MCF 10A (cell line): ENCODE measurements at regions of chr4 and their contacts with region 1.

Region 1: GRCh38 chr4:154731756-154732155 is 12.0 kb upstream of the LRAT start:
- DNase-seq: no peak
- H3K4me3 Mint-ChIP-seq: no peak overlapping the region
- H3K27ac Mint-ChIP-seq: peak overlapping the region; percentile 2
- H3K4me1 Mint-ChIP-seq: peaks cover 9% of the 10 kb centered on the region
- H3K27me3 Mint-ChIP-seq: no peaks in the 10 kb centered on the region
- CTCF ChIP-seq: no peak

Region 2: DNA sequence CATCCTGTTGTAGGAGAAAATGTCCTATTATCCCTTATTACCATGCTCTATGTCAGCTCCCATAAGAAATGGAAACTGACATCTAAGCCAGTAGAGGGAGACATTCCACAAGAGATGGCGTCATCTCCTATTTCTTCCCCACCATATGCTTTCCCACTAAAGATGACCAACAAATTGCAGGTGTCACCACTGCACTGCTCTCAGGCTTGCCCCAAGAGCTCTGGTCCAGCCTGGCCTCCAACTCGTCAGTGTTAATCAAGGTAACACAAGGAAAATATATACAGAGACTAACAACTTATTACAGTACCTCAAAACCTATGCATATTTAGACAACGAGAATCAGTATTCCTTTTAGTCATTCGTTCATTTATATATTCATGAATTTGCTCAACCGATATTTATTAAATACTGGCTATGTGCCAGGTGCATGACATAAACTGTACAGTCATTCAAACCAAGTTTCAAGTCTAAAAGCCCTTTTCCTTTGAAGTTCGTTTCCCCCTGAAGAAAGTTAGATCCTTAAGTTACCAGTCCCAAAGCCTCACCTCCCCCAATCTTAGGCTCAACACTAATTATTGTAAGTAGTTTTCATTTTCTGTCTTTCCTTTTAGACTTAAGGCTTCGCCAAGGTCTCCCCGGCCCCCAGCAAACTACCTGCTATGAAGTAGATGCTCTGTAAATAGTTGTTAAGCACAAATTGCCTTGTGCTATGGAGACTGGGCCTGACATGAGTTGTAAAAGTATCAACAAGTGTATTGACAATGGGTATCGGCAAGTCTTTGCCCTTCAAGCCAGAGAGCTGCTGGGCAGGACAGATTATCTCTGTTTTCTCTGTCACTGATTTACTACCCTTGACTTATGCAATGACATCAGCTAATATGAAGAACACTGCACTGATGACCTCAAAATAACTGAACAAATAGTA is 172.0 kb before region 1 on chr4:
- CTCF ChIA-PET with region 1: no interaction called
- POLR2A ChIA-PET with region 1: no interaction called
- intact Hi-C with region 1: no loop called
- DNase-seq: peak; percentile 77
- H3K4me3 Mint-ChIP-seq: no peak overlapping the region
- H3K27ac Mint-ChIP-seq: no peak overlapping the region
- H3K4me1 Mint-ChIP-seq: peaks cover 18% of the 10 kb centered on the region
- H3K27me3 Mint-ChIP-seq: no peaks in the 10 kb centered on the region
- CTCF ChIP-seq: peak; percentile 78

Region 3: GRCh38 chr4:154720123-154720522 is 11.6 kb before region 1 on chr4:
- CTCF ChIA-PET with region 1: interaction called, 4 read pairs
- POLR2A ChIA-PET with region 1: interaction called, 25 read pairs
- intact Hi-C with region 1: no loop called
- DNase-seq: peak; percentile 72
- H3K4me3 Mint-ChIP-seq: no peak overlapping the region
- H3K27ac Mint-ChIP-seq: peak overlapping the region; percentile 93
- H3K4me1 Mint-ChIP-seq: peaks cover 33% of the 10 kb centered on the region
- H3K27me3 Mint-ChIP-seq: no peaks in the 10 kb centered on the region
- CTCF ChIP-seq: no peak

Region 4: DNA sequence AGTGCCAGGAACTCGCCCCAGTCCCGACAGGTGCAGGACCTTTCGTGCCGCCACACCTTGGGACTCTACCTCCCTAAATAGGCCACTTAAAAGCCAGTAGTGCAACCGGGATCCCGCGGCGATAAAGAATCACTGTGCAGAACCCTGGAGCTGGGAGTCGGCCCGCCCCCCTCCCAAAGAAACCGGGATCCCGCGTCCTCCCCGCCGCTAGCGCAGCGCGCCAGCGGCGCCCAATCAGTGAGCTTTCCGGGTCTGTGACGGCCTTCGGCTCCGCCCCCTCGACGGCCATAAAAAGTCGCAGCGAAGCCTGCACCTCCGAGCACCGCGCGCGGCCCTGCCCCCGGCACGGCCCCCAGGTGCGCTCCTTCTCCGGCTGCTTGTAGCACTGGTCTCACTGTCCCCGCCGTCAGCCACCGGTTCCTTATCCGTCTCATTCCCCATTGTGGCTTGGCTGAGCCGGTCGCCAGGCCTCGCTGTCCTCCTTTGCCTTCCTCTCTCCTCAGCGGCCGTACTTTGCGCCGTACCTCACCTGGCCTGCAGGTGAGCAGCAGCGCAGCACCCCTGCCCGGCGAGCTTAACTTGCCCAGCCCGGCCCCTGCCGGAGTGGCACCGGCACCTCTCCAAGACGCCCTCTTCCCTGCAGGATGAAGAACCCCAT is 12.1 kb after region 1 on chr4 and contains the start of gene LRAT:
- CTCF ChIA-PET with region 1: interaction called, 6 read pairs
- POLR2A ChIA-PET with region 1: interaction called, 17 read pairs
- intact Hi-C with region 1: no loop called
- DNase-seq: peak; percentile 77
- H3K4me3 Mint-ChIP-seq: peak within 1 kb of the TSS; percentile 98
- H3K27ac Mint-ChIP-seq: peak within 1 kb of the TSS; percentile 88
- H3K4me1 Mint-ChIP-seq: peaks cover 36% of the 10 kb centered on the region
- H3K27me3 Mint-ChIP-seq: no peaks in the 10 kb centered on the region
- CTCF ChIP-seq: peak; percentile 19
- total RNA-seq, gene LRAT: 3.5 and 5.8 TPM in 2 replicates

Region 5: DNA sequence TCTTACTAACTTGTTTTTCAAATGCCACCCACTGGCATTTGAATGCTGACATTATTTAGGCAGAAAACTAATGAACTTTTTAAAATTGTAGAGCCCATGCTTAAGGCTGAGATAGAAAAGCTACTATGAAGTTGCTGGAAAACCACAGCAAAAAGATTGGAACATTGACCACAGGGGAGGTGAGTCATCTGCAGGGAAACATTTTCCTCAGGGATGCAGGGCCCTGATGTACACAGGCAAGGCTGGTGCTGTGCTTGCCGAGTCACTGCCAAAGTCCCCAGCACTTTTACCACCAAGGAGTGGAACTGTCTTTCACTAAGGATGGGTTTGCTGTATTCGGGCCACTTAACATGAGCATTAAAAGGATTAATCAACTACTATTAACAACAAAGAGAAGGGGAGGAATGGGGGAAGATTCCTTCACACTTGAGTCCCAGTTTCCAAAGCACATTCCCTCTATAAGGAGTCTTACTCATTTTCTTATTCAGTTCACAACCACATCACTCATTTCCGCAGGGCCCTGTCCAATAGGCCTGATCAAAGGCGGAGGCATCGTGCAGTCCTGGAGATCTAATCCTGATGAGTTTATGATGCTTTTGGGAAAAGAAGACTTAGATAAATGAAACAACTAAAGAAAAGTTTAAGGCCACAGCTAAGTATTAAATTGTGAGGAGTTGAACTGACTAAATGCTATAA is 273.8 kb after region 1 on chr4:
- CTCF ChIA-PET with region 1: no interaction called
- POLR2A ChIA-PET with region 1: no interaction called
- intact Hi-C with region 1: no loop called
- DNase-seq: peak; percentile 63
- H3K4me3 Mint-ChIP-seq: no peak overlapping the region
- H3K27ac Mint-ChIP-seq: no peak overlapping the region
- H3K4me1 Mint-ChIP-seq: peaks cover 26% of the 10 kb centered on the region
- H3K27me3 Mint-ChIP-seq: no peaks in the 10 kb centered on the region
- CTCF ChIP-seq: no peak